HAP-1 (cell line): ENCODE measurements at regions of chr11 and their contacts with region 1.

Region 1: DNA sequence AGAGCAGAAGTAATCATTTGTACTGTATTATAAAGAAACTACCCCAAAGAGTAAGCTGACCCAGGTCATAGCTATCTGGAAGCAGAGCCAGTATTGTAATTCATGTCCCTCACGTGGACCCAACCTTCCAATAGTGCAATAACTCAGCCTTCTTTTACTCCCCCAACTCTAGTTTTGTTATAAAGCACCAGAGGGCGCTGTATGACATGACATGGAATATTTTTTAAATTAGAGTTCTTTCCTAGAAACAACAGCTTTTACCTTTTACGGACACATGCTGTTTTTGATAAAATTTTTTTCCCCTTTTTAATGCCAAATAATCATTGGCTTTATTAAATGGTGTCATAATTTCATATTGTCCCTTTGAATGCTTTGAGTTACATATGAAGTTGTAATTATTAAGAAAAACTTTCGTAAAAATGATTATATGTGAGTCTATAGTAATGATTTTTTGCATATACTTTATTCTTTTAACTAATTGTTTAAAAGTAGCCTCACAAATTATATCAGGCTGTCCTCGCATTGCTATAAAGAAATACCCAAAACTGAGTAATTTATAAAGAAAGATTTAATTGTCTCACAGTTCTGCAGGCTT is 76.9 kb downstream of the DKK3 start:
- DNase-seq: peak; percentile 18 to 45
- H3K4me3 ChIP-seq: no peak overlapping the region
- H3K4me1 ChIP-seq: no peaks in the 10 kb centered on the region
- H3K27me3 ChIP-seq: no peaks in the 10 kb centered on the region

Region 2: GRCh38 chr11:12269104-12269441 is 337.5 kb after region 1 on chr11:
- in situ Hi-C with region 1: loop called (anchors 25 kb)
- DNase-seq: no peak
- H3K4me3 ChIP-seq: no peak overlapping the region
- H3K4me1 ChIP-seq: no peaks in the 10 kb centered on the region
- H3K27me3 ChIP-seq: no peaks in the 10 kb centered on the region